Naive thymus-derived CD4-positive, alpha-beta T cell (primary cell): ENCODE measurements at regions of chr6 and their contacts with region 1.

Region 1: GRCh38 chr6:50816115-50816675 is 2.5 kb upstream of the TFAP2B start:
- DNase-seq: peak in 7 of 9 donors; percentile 16 to 55 (median 23)
- ATAC-seq: peak; percentile 57
- H3K4me3 ChIP-seq: peak overlapping the region; percentile 58
- H3K4me3 Mint-ChIP-seq: peak overlapping the region; percentile 66 to 93 (median 87)
- H3K27ac ChIP-seq: no peak overlapping the region
- H3K27ac Mint-ChIP-seq: no peak overlapping the region
- H3K4me1 ChIP-seq: peaks cover 0 to 5% of the 10 kb centered on the region in 2 donors
- H3K4me1 Mint-ChIP-seq: peaks cover 9 to 35% (median 24%) of the 10 kb centered on the region in 7 donors
- H3K27me3 ChIP-seq: peaks cover 0 to 17% of the 10 kb centered on the region in 2 donors
- H3K27me3 Mint-ChIP-seq: peaks cover 45 to 77% (median 68%) of the 10 kb centered on the region in 5 donors

Region 2: GRCh38 chr6:50843842-50844241 is 27.6 kb after region 1 on chr6:
- CTCF ChIA-PET with region 1: no interaction called
- POLR2A ChIA-PET with region 1: no interaction called
- intact Hi-C with region 1: loop called in 1 of 2 experiments (anchors 2 kb)
- DNase-seq: no peak
- ATAC-seq: no peak
- H3K4me3 ChIP-seq: no peak overlapping the region
- H3K4me3 Mint-ChIP-seq: no peak overlapping the region
- H3K27ac ChIP-seq: no peak overlapping the region
- H3K27ac Mint-ChIP-seq: peak overlapping the region in 1 of 9 donors; percentile 42
- H3K4me1 ChIP-seq: no peaks in the 10 kb centered on the region
- H3K4me1 Mint-ChIP-seq: peaks cover 0 to 1% (median 0%) of the 10 kb centered on the region in 7 donors
- H3K27me3 ChIP-seq: peaks cover 0 to 13% of the 10 kb centered on the region in 2 donors
- H3K27me3 Mint-ChIP-seq: peaks cover 82 to 93% (median 85%) of the 10 kb centered on the region in 5 donors

Region 3: GRCh38 chr6:51753635-51754034 is 937.4 kb after region 1 on chr6:
- CTCF ChIA-PET with region 1: no interaction called
- POLR2A ChIA-PET with region 1: no interaction called
- intact Hi-C with region 1: loop called in 1 of 2 experiments (anchors 5 kb)
- DNase-seq: no peak
- ATAC-seq: no peak
- H3K4me3 ChIP-seq: no peak overlapping the region
- H3K4me3 Mint-ChIP-seq: no peak overlapping the region
- H3K27ac ChIP-seq: no peak overlapping the region
- H3K27ac Mint-ChIP-seq: no peak overlapping the region
- H3K4me1 ChIP-seq: no peaks in the 10 kb centered on the region
- H3K4me1 Mint-ChIP-seq: no peaks in the 10 kb centered on the region
- H3K27me3 ChIP-seq: no peaks in the 10 kb centered on the region
- H3K27me3 Mint-ChIP-seq: peaks cover 0 to 2% (median 0%) of the 10 kb centered on the region in 5 donors

Region 4: GRCh38 chr6:51959744-51960383 is 1143.7 kb after region 1 on chr6:
- CTCF ChIA-PET with region 1: no interaction called
- POLR2A ChIA-PET with region 1: no interaction called
- intact Hi-C with region 1: loop called in 1 of 2 experiments (anchors 1 kb)
- DNase-seq: peak in 2 of 9 donors; percentile 7 to 32
- ATAC-seq: no peak
- H3K4me3 ChIP-seq: no peak overlapping the region
- H3K4me3 Mint-ChIP-seq: no peak overlapping the region
- H3K27ac ChIP-seq: no peak overlapping the region
- H3K27ac Mint-ChIP-seq: no peak overlapping the region
- H3K4me1 ChIP-seq: no peaks in the 10 kb centered on the region
- H3K4me1 Mint-ChIP-seq: no peaks in the 10 kb centered on the region
- H3K27me3 ChIP-seq: no peaks in the 10 kb centered on the region
- H3K27me3 Mint-ChIP-seq: peaks cover 0 to 37% (median 20%) of the 10 kb centered on the region in 5 donors

Region 5: GRCh38 chr6:52049252-52050050 is 1233.3 kb after region 1 on chr6:
- CTCF ChIA-PET with region 1: no interaction called
- POLR2A ChIA-PET with region 1: no interaction called
- intact Hi-C with region 1: loop called (anchors 1 to 5 kb)
- DNase-seq: peak in 5 of 9 donors; percentile 7 to 32 (median 14)
- ATAC-seq: no peak
- H3K4me3 ChIP-seq: no peak overlapping the region
- H3K4me3 Mint-ChIP-seq: no peak overlapping the region
- H3K27ac ChIP-seq: no peak overlapping the region
- H3K27ac Mint-ChIP-seq: no peak overlapping the region
- H3K4me1 ChIP-seq: no peaks in the 10 kb centered on the region
- H3K4me1 Mint-ChIP-seq: peaks cover 0 to 1% (median 0%) of the 10 kb centered on the region in 7 donors
- H3K27me3 ChIP-seq: no peaks in the 10 kb centered on the region
- H3K27me3 Mint-ChIP-seq: peaks cover 15 to 34% (median 26%) of the 10 kb centered on the region in 5 donors